ENCODE measurements at regions of chr22 and their contacts with region 1.

Region 1: GRCh38 chr22:31127181-31127772 is 4.5 kb downstream of the INPP5J start:
- DNase-seq: no peak
- ATAC-seq: no peak
- H3K4me3 ChIP-seq: no peak overlapping the region
- H3K27ac ChIP-seq: no peak overlapping the region
- H3K4me1 ChIP-seq: no peaks in the 10 kb centered on the region
- H3K27me3 ChIP-seq: no peaks in the 10 kb centered on the region
- CTCF ChIP-seq: no peak

Region 2: GRCh38 chr22:31394326-31394725 is 267.0 kb after region 1 on chr22:
- CTCF ChIA-PET with region 1: no interaction called
- POLR2A ChIA-PET with region 1: interaction called, 12 read pairs
- in situ Hi-C with region 1: no loop called
- intact Hi-C with region 1: no loop called
- DNase-seq: no peak
- ATAC-seq: no peak
- H3K4me3 ChIP-seq: no peak overlapping the region
- H3K27ac ChIP-seq: no peak overlapping the region
- H3K4me1 ChIP-seq: peaks cover 11% of the 10 kb centered on the region
- H3K27me3 ChIP-seq: no peaks in the 10 kb centered on the region
- CTCF ChIP-seq: no peak

Measured in Panc1 (cell line).